PC-3 (cell line): ENCODE measurements at regions of chr1 and their contacts with region 1.

Region 1: GRCh38 chr1:225318706-225319575 is 108.9 kb downstream of the LBR start:
- DNase-seq: peak; percentile 86
- ATAC-seq: peak; percentile 95
- H3K4me3 ChIP-seq: no peak overlapping the region
- H3K27ac ChIP-seq: no peak overlapping the region
- H3K4me1 ChIP-seq: peaks cover 16% of the 10 kb centered on the region
- H3K27me3 ChIP-seq: no peaks in the 10 kb centered on the region
- CTCF ChIP-seq: peak; percentile 96

Region 2: DNA sequence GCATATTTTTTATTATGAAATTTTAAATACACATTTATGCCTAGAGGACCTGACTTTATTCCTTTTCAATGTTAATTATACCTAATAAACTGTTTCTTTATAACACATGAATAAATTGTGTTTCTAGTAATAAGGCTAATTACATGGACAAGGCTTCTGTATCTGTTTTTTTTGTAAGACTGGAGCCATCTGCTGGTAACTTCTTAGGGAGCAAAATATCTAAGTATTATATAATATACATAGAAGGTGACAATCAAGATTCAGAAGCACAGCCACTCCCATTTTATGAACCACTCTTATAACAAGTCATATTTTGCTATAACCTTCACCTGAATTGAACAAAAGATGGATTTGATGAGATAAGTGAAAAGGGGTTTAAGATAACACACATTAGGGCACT is 24.7 kb after region 1 on chr1:
- CTCF ChIA-PET with region 1: interaction called, 17 read pairs
- POLR2A ChIA-PET with region 1: interaction called, 4 read pairs
- intact Hi-C with region 1: loop called (anchors 1 kb)
- DNase-seq: peak; percentile 48
- ATAC-seq: peak; percentile 54
- H3K4me3 ChIP-seq: no peak overlapping the region
- H3K27ac ChIP-seq: no peak overlapping the region
- H3K4me1 ChIP-seq: peaks cover 15% of the 10 kb centered on the region; the same call in 1 of the 2 replicates
- H3K27me3 ChIP-seq: no peaks in the 10 kb centered on the region
- CTCF ChIP-seq: peak; percentile 76

Region 3: DNA sequence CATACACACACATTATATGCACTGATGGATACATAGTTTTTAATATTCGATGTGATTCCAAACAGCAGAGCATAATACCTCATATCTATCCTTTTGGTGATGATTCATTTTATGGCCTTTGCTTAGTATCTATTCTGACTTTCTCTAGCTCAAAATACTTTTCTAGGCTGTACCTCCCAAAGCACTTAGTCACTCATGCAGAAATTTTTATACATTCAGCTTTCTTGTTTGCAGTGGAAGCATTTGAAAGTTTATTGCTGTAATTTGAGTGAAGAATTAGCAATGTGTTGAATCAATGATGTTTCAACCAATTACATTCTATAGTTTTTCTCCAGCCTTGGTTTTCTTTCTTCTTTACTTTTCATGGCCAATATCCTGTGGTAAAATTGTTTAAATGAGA is 42.2 kb after region 1 on chr1:
- CTCF ChIA-PET with region 1: interaction called, 4 read pairs
- POLR2A ChIA-PET with region 1: no interaction called
- intact Hi-C with region 1: loop called (anchors 1 kb)
- DNase-seq: peak; percentile 74
- ATAC-seq: peak; percentile 96
- H3K4me3 ChIP-seq: no peak overlapping the region
- H3K27ac ChIP-seq: peak overlapping the region; percentile 43; the same call in 1 of the 2 replicates
- H3K4me1 ChIP-seq: peaks cover 15% of the 10 kb centered on the region
- H3K27me3 ChIP-seq: no peaks in the 10 kb centered on the region
- CTCF ChIP-seq: no peak

Region 4: DNA sequence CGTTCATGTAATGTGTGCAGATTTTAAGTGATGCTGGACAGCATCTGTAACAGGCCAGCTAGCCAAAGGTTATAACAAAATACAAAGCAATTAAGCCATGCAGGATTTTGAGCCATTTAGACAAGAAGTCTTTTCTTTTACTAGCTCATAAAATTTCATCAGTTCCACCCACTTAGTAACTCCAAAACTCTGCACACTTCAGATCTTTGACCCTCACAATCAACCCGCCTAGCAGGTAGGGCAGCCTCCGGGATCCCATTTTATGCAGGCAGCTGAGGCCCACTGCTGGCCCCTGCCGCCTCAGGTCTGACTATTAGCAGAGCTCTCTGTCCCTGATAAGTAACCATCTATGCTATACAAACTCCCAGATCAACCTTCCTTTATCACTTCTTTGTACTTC is 99.7 kb after region 1 on chr1:
- CTCF ChIA-PET with region 1: interaction called, 3 read pairs
- POLR2A ChIA-PET with region 1: no interaction called
- intact Hi-C with region 1: loop called (anchors 1 kb)
- DNase-seq: peak; percentile 54
- ATAC-seq: peak; percentile 48
- H3K4me3 ChIP-seq: no peak overlapping the region
- H3K27ac ChIP-seq: no peak overlapping the region
- H3K4me1 ChIP-seq: peaks cover 27% of the 10 kb centered on the region
- H3K27me3 ChIP-seq: no peaks in the 10 kb centered on the region
- CTCF ChIP-seq: peak; percentile 29; the same call in 1 of the 2 replicates

Region 5: GRCh38 chr1:225977937-225978748 is 659.2 kb after region 1 on chr1:
- CTCF ChIA-PET with region 1: no interaction called
- POLR2A ChIA-PET with region 1: no interaction called
- intact Hi-C with region 1: loop called (anchors 10 kb)
- DNase-seq: no peak
- ATAC-seq: no peak
- H3K4me3 ChIP-seq: no peak overlapping the region
- H3K27ac ChIP-seq: no peak overlapping the region
- H3K4me1 ChIP-seq: peaks cover 2% of the 10 kb centered on the region; the same call in 1 of the 2 replicates
- H3K27me3 ChIP-seq: no peaks in the 10 kb centered on the region
- CTCF ChIP-seq: no peak